Heart left ventricle (tissue), 16 donors: ENCODE measurements at regions of chr15 and their contacts with region 1.

Region 1: GRCh38 chr15:64803526-64803925 is 21.9 kb downstream of the PIF1 start:
- DNase-seq: no peak
- ATAC-seq: no peak
- H3K4me3 ChIP-seq: no peak overlapping the region
- H3K27ac ChIP-seq: peak overlapping the region in 8 of 12 donors; percentile 16 to 90 (median 76)
- H3K4me1 ChIP-seq: peaks cover 0 to 39% (median 12%) of the 10 kb centered on the region in 12 donors
- H3K27me3 ChIP-seq: no peaks in the 10 kb centered on the region
- CTCF ChIP-seq: no peak
- POLR2A ChIP-seq: no peak

Region 2: GRCh38 chr15:64740311-64741170 is 63.0 kb before region 1 on chr15:
- intact Hi-C with region 1: loop called in 3 of 10 experiments (anchors 2 to 5 kb)
- DNase-seq: peak; percentile 58 to 87 (median 72)
- ATAC-seq: peak; percentile 88 to 91 (median 90)
- H3K4me3 ChIP-seq: peak overlapping the region in 6 of 12 donors; percentile 1 to 40 (median 12)
- H3K27ac ChIP-seq: peak overlapping the region; percentile 7 to 90 (median 60)
- H3K4me1 ChIP-seq: peaks cover 0 to 59% (median 24%) of the 10 kb centered on the region in 12 donors
- H3K27me3 ChIP-seq: no peaks in the 10 kb centered on the region
- CTCF ChIP-seq: peak in 10 of 12 donors; percentile 10 to 54 (median 38)
- POLR2A ChIP-seq: peak in 1 of 2 donors; percentile 10